ENCODE measurements at regions of chr4 and their contacts with region 1.

Region 1: GRCh38 chr4:94595879-94596483 is 144.2 kb downstream of the PDLIM5 start:
- DNase-seq: peak in 3 of 14 experiments; percentile 53 to 57 (median 55)
- ATAC-seq: no peak
- H3K4me3 ChIP-seq: no peak overlapping the region
- H3K4me3 Mint-ChIP-seq: no peak overlapping the region
- H3K27ac ChIP-seq: no peak overlapping the region
- H3K27ac Mint-ChIP-seq: no peak overlapping the region
- H3K4me1 ChIP-seq: no peaks in the 10 kb centered on the region
- H3K4me1 Mint-ChIP-seq: no peaks in the 10 kb centered on the region
- H3K27me3 ChIP-seq: no peaks in the 10 kb centered on the region
- H3K27me3 Mint-ChIP-seq: no peaks in the 10 kb centered on the region
- CTCF ChIP-seq: peak; percentile 89

Region 2: GRCh38 chr4:94304365-94304971 is 291.5 kb before region 1 on chr4:
- CTCF ChIA-PET with region 1: no interaction called
- POLR2A ChIA-PET with region 1: no interaction called
- intact Hi-C with region 1: loop called (anchors 1 to 5 kb)
- DNase-seq: peak in 4 of 14 experiments; percentile 9 to 49 (median 29)
- ATAC-seq: no peak
- H3K4me3 ChIP-seq: no peak overlapping the region
- H3K4me3 Mint-ChIP-seq: no peak overlapping the region
- H3K27ac ChIP-seq: no peak overlapping the region
- H3K27ac Mint-ChIP-seq: no peak overlapping the region
- H3K4me1 ChIP-seq: no peaks in the 10 kb centered on the region
- H3K4me1 Mint-ChIP-seq: no peaks in the 10 kb centered on the region
- H3K27me3 ChIP-seq: no peaks in the 10 kb centered on the region
- H3K27me3 Mint-ChIP-seq: no peaks in the 10 kb centered on the region
- CTCF ChIP-seq: peak; percentile 62

Region 3: GRCh38 chr4:94406668-94407437 is 189.1 kb before region 1 on chr4:
- CTCF ChIA-PET with region 1: interaction called, 3 read pairs
- POLR2A ChIA-PET with region 1: no interaction called
- intact Hi-C with region 1: loop called (anchors 1 kb)
- DNase-seq: peak; percentile 9 to 84 (median 37)
- ATAC-seq: peak; percentile 61
- H3K4me3 ChIP-seq: no peak overlapping the region
- H3K4me3 Mint-ChIP-seq: no peak overlapping the region
- H3K27ac ChIP-seq: no peak overlapping the region
- H3K27ac Mint-ChIP-seq: no peak overlapping the region
- H3K4me1 ChIP-seq: no peaks in the 10 kb centered on the region
- H3K4me1 Mint-ChIP-seq: peaks cover 4% of the 10 kb centered on the region
- H3K27me3 ChIP-seq: no peaks in the 10 kb centered on the region
- H3K27me3 Mint-ChIP-seq: peaks cover 5% of the 10 kb centered on the region
- CTCF ChIP-seq: peak; percentile 97

Measured in CD4-positive, alpha-beta T cell (primary cell).